ENCODE measurements at regions of chr1 and their contacts with region 1.

Region 1: GRCh38 chr1:95043141-95043980 is 29.4 kb downstream of the ALG14 start:
- DNase-seq: peak; percentile 74
- H3K4me3 ChIP-seq: no peak overlapping the region
- H3K27ac ChIP-seq: no peak overlapping the region
- H3K27me3 ChIP-seq: no peaks in the 10 kb centered on the region
- CTCF ChIP-seq: peak; percentile 99

Region 2: GRCh38 chr1:94819238-94819940 is 224.0 kb before region 1 on chr1:
- CTCF ChIA-PET with region 1: interaction called, 11 read pairs
- POLR2A ChIA-PET with region 1: interaction called, 3 read pairs
- DNase-seq: no peak
- H3K4me3 ChIP-seq: peak overlapping the region; percentile 65
- H3K27ac ChIP-seq: no peak overlapping the region
- H3K27me3 ChIP-seq: peaks cover 9% of the 10 kb centered on the region
- CTCF ChIP-seq: no peak

Region 3: GRCh38 chr1:94863919-94864318 is 179.4 kb before region 1 on chr1:
- CTCF ChIA-PET with region 1: interaction called, 266 read pairs
- POLR2A ChIA-PET with region 1: no interaction called
- DNase-seq: peak; percentile 46
- H3K4me3 ChIP-seq: no peak overlapping the region
- H3K27ac ChIP-seq: peak overlapping the region; percentile 90
- H3K27me3 ChIP-seq: no peaks in the 10 kb centered on the region
- CTCF ChIP-seq: no peak

Region 4: DNA sequence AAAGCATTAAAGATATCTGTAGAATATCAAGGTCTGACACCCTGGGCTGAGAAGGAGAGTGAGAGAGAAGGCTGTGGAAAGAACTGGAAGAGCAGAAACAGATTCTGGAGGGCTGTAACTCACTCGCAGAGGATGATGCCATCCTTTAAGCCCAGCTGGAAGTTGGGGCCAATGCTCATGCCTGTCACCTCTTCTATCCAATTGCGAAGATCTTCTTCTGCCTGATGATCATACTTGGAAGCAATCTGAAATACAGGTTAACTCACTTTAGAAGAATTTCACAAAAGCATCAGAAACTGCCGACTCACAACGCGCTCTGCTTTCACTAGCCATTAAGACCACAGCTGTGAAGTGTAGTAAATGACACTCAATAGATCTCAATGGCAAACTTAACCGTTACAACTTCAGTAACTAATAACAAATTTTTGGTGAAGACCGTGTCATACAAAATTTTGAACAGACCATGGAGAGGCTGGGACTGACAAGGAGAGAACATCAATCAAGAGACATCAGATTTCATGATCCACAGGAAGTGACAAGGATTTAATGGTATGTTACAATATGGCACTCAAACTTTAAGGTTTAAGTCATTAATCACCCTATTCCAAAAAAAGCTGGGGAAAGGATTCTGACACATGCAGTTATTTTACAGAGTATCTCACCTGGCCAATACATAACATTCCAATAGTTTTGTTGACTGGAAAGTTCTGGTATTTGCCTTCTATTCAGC is 139.9 kb before region 1 on chr1:
- CTCF ChIA-PET with region 1: interaction called, 25 read pairs
- POLR2A ChIA-PET with region 1: interaction called, 3 read pairs
- DNase-seq: no peak
- H3K4me3 ChIP-seq: no peak overlapping the region
- H3K27ac ChIP-seq: no peak overlapping the region
- H3K27me3 ChIP-seq: no peaks in the 10 kb centered on the region
- CTCF ChIP-seq: no peak

Region 5: GRCh38 chr1:95015076-95015475 is 28.3 kb before region 1 on chr1:
- CTCF ChIA-PET with region 1: interaction called, 14 read pairs
- POLR2A ChIA-PET with region 1: no interaction called
- DNase-seq: no peak
- H3K4me3 ChIP-seq: no peak overlapping the region
- H3K27ac ChIP-seq: no peak overlapping the region
- H3K27me3 ChIP-seq: no peaks in the 10 kb centered on the region
- CTCF ChIP-seq: no peak

Region 6: DNA sequence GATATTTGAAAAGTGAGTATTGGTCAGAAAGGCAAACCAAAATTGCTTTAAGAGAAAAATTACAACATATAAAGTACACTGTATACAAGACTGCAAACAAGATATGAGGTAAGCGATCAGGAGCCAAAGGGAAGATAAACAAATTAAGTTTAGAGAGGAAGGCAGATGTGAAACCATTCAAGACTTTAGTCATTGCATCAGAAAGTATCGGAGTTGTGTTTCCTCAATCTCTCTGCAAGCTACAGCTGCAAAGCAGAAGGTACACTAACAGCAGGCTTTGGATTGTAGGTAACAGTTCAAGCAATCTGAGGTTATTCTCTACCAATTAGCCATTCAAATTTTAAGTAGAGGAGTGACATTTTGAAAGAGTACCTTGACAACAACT is 52.5 kb after region 1 on chr1:
- CTCF ChIA-PET with region 1: no interaction called
- POLR2A ChIA-PET with region 1: no interaction called
- DNase-seq: peak; percentile 48
- H3K4me3 ChIP-seq: no peak overlapping the region
- H3K27ac ChIP-seq: peak overlapping the region; percentile 43
- H3K27me3 ChIP-seq: no peaks in the 10 kb centered on the region
- CTCF ChIP-seq: no peak

Region 7: DNA sequence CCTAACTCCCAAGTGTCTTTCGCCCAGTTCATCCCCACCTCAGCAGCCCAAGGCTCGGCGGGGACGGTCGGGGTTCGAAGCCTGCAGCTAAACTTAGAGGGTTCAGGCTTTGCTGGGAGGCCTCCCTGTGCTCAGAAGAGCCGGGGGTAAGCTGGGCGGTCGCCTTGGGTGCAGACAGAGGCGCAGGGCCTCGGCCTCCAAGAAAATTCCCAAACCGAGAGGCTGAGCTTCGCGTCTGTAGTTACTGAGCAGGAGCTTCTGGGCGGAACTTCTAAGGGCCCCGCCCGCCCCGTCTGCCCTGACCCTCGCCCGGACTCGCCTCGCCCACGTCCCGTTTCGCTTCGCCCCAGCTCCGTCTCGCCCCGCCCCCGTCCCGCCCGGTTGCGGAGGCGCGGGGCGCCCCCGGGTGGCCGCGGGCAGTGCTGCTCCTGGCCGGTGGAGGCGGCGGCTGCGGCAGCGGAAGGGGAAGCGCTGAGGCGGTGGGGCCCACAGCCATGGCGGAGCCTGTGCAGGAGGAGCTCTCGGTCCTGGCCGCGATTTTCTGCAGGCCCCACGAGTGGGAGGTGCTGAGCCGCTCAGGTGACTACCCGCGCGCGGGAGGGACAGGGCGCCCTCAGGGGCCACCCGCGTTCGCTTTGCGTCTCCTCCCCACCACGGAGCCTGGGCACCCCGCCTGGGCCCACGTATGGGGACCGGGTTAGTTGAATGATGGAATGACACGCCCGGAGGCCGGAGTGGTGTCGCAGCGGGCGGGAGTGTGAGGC is 190.6 kb after region 1 on chr1 and contains the start of gene RWDD3:
- CTCF ChIA-PET with region 1: interaction called, 17 read pairs
- POLR2A ChIA-PET with region 1: no interaction called
- DNase-seq: peak; percentile 61
- H3K4me3 ChIP-seq: peak within 1 kb of the TSS; percentile 83
- H3K27ac ChIP-seq: peak within 1 kb of the TSS; percentile 50
- H3K27me3 ChIP-seq: no peaks in the 10 kb centered on the region
- CTCF ChIP-seq: peak; percentile 58
- polyA plus RNA-seq, gene RWDD3: 17.6 and 24.6 TPM in 2 replicates

Region 8: DNA sequence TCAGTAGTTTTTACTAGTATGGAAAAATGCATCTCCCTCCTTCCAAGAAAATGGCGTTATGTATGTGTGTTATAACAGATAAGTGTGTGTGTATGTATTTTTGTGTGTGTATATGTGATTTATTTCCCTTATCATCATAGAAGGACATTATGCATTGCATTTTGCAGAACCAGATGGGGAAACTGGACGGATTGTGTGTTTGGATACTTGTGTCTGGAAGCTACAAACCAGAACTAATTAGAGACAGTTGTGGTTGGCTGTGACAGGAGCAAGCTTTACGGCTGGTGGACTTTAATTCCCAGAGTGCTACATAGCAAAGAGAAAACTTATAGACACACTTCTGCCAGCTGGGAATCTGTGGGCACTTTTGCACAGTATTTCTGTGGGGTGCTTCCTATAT is 353.2 kb after region 1 on chr1:
- CTCF ChIA-PET with region 1: no interaction called
- POLR2A ChIA-PET with region 1: no interaction called
- DNase-seq: no peak
- H3K4me3 ChIP-seq: no peak overlapping the region
- H3K27ac ChIP-seq: no peak overlapping the region
- H3K27me3 ChIP-seq: no peaks in the 10 kb centered on the region
- CTCF ChIP-seq: no peak

Measured in AG04450 (cell line).